ENCODE measurements at regions of chr11 and their contacts with region 1.

Region 1: DNA sequence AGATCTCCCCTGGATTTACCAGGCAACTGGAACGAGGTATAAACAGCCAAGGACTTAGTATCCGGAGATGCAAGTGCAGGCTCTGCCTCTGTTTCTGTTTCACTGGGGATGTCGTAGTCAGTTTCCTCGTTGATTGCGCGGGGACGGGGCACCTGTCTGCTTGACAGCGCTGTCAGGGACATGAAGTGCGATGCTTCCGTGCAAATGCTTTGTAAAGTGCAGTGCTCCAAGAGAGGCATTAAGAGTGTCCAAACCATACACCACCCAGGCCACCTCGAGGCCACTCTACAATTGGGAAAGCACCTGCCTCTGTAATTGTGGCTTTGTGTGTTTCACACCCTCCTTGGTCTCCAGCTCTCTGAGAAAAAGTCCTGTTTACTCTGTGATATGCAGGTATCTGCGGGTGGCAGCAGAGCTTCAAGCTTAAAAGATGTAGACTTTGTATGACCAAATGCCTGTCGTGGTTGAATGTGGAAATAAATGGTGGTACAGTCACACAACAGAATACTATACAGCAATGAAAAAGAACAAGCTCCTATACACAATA is 18.6 kb upstream of the CD5 start:
- DNase-seq: peak; percentile 75
- H3K4me3 Mint-ChIP-seq: peak overlapping the region; percentile 88
- H3K27ac Mint-ChIP-seq: peak overlapping the region; percentile 99
- H3K4me1 Mint-ChIP-seq: peaks cover 67% of the 10 kb centered on the region
- H3K27me3 Mint-ChIP-seq: no peaks in the 10 kb centered on the region

Region 2: GRCh38 chr11:60978546-60979380 is 104.9 kb before region 1 on chr11:
- intact Hi-C with region 1: loop called (anchors 2 kb)
- DNase-seq: peak; percentile 54
- H3K4me3 Mint-ChIP-seq: peak overlapping the region; percentile 86
- H3K27ac Mint-ChIP-seq: peak overlapping the region; percentile 92
- H3K4me1 Mint-ChIP-seq: peaks cover 87% of the 10 kb centered on the region
- H3K27me3 Mint-ChIP-seq: no peaks in the 10 kb centered on the region

Region 3: DNA sequence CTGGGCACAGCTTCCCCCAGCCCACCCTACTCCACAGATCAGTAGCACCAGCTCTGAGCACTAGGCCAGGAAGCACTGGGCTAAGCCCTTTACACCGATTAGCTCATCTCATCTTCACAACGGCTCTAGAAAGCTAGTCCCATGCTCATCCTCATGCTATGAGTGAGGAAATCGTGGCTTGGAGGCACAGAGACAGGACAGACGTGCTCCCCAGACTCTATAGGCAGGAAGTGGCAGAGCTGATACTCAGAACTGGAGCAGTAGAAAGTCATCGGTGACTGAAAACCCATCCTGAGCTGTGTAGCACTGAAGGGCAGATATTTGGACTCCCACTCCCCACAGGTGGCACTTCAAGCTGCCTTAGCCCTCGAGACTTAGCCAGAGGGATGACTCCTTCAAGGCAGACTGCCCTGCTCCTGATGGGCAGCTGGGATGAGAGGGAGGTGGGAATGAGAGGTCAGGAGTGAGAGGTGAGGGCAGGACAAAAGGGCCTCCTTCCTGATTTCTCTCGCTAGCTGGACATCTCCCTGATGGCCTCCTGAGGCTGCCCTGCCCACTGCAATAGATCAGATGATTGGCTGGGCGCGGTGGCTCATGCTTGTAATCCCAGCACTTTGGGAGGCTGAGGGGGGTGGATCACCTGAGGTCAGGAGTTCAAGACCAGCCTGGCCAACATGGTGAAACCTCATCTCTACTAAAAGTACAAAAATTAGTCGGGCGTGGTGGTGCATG is 28.3 kb after region 1 on chr11:
- intact Hi-C with region 1: loop called (anchors 2 kb)
- DNase-seq: peak; percentile 70
- H3K4me3 Mint-ChIP-seq: peak overlapping the region; percentile 84
- H3K27ac Mint-ChIP-seq: peak overlapping the region; percentile 89
- H3K4me1 Mint-ChIP-seq: peaks cover 99% of the 10 kb centered on the region
- H3K27me3 Mint-ChIP-seq: no peaks in the 10 kb centered on the region

Region 4: GRCh38 chr11:61816736-61817455 is 733.2 kb after region 1 on chr11 and contains the start of gene FADS1:
- intact Hi-C with region 1: no loop called
- DNase-seq: peak; percentile 83
- H3K4me3 Mint-ChIP-seq: peak within 1 kb of the TSS; percentile 95
- H3K27ac Mint-ChIP-seq: peak within 1 kb of the TSS; percentile 97
- H3K4me1 Mint-ChIP-seq: peaks cover 22% of the 10 kb centered on the region
- H3K27me3 Mint-ChIP-seq: no peaks in the 10 kb centered on the region
- total RNA-seq, gene FADS1: 92.3 and 97.7 TPM in 2 replicates

Measured in activated T-helper 1 cell treated with anti-CD3 and anti-CD28 coated beads, Interleukin-12 subunit alpha, Interleukin-12 subunit beta, Interleukin-2, Interleukin-4 antibody, amounts not matched to agents 30 ng/mL and 10 ng/mL and 1 ng/mL, durations not matched to agents 14 hours and 24 hours and 36 hours (primary cell).